PC-9 (cell line): ENCODE measurements at regions of chr17 and their contacts with region 1.

Region 1: GRCh38 chr17:19433727-19434340 is 22.8 kb downstream of the RNF112 start:
- DNase-seq: no peak
- H3K4me3 ChIP-seq: no peak overlapping the region
- H3K27ac ChIP-seq: no peak overlapping the region
- H3K4me1 ChIP-seq: no peaks in the 10 kb centered on the region
- H3K27me3 ChIP-seq: no peaks in the 10 kb centered on the region
- CTCF ChIP-seq: no peak

Region 2: DNA sequence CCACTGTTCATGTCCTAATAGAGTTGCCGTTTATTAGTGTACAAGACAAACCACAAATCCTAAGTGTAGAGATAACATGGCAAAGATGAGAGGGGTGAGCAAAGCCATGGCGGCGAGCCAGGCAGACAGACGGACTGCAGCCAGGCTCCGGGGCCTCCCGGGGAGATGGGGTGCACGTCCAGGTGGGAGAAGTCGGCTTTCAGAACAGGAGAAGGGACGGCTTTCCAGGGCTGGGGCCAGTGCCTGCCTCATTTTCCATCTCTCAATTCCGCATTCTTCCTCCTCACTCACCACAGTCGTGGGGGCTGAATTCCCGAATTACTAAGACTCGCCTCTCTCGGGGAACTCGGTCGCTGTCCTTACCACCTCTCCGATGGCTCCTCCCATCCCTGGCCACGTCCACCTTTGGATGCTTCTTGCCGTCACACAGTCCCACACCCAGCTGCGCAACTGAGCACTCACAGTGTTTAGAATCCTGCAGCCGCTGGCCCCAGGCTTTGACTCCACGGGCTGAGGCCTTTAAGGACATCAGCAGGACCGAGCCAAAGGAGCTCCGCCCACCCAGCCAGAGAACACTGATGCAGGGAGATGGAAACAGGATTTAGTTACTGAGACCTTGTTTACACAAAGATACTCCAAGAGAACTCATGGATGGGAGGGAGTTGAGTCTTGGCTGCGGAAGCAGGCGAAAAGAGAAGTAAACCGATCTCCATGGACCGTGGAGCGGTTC is 36.9 kb after region 1 on chr17:
- CTCF ChIA-PET with region 1: interaction called, 20 read pairs
- POLR2A ChIA-PET with region 1: no interaction called
- intact Hi-C with region 1: no loop called
- DNase-seq: peak in 1 of 2 experiments; percentile 10
- H3K4me3 ChIP-seq: no peak overlapping the region
- H3K27ac ChIP-seq: no peak overlapping the region
- H3K4me1 ChIP-seq: no peaks in the 10 kb centered on the region
- H3K27me3 ChIP-seq: no peaks in the 10 kb centered on the region
- CTCF ChIP-seq: no peak